ENCODE measurements at regions of chr3 and their contacts with region 1.

Region 1: DNA sequence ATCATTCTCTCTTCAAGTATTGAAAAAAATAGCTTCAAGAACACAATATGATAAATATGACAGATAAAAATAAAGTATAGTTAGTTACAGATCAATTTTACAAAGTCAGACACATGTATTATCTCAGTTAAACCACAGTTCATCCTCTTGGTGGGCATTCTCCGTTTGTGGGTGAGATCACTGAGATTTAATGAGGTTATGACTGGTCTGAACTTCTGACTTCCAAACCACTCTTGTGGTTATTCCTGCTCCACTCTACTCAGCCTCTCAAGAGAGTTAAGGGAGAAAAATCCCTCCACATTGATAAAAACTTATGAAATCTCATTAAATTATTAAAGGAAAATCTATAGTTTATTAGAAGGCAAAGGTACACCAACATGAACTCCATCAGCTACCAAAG is 229.9 kb upstream of the LRTM1 start:
- DNase-seq: no peak
- H3K4me3 ChIP-seq: no peak overlapping the region
- CTCF ChIP-seq: no peak

Region 2: DNA sequence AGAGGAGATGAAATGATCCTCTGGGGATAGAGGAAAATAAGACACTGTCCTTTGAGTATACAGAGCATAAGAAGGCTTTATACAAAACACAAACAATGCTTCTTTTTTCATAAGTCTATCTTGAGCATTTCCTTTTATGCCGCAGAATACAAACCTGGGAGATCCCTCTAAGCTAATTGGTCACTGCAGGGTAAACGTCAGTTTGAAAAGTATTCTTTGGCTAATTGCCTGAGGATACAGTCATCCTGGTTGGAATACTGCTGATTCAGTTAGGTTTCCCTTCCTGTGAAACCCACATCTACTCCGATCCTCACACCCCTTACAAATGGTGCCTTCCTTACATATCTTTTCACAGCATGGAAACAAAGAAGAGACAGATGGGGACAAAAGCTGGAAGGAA is 318.8 kb after region 1 on chr3:
- in situ Hi-C with region 1: loop called (anchors 5 kb)
- DNase-seq: peak; percentile 95
- H3K4me3 ChIP-seq: peak overlapping the region; percentile 83
- CTCF ChIP-seq: no peak

Measured in astrocyte of the cerebellum (primary cell).